ENCODE measurements at regions of chr1 and their contacts with region 1.

Region 1: DNA sequence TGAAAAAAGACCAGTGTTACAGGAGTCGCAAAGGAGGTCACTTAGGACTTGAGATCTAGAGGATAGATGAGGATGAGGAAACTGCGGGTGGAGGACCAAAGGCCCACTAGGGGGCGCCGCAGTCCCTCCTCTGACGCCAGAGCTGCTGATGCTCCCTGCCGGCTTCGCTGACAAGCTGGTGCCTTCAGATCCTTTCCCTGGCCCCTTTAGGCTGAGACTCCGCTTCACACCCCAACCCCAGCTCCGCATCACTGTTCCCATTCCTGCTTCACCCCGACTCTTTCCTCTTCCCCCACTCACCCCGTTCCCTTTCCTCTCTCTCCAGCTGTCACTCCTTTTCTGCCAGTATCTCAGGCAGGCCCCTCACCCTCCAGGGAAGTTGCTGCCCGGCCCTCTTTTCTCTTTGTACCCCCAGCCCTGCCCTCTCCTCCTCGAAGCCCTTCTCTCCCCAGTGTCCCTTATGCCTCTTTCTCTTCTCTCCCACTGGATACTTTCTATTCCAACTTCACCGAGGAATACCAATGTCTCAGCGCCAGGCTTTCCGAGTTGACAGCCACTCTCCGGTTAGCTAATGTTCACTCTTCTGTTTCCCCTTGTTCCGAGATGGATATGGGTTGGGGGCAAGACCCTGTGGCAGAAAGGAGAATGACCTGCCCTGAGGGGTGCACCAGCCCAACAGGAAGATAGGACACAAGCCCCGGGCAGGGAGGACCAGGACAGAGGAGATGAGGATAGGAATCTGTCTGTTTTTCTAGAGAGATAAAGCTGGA is 4.5 kb downstream of the KCNJ9 start:
- DNase-seq: peak; percentile 83
- ATAC-seq: peak; percentile 63 to 73

Region 2: GRCh38 chr1:160031365-160032164 is 54.3 kb before region 1 on chr1 and contains the start of gene PIGM:
- intact Hi-C with region 1: no loop called
- DNase-seq: peak; percentile 96
- ATAC-seq: peak; percentile 97 to 98
- total RNA-seq, gene PIGM: 3.3 to 3.4 TPM

Region 3: DNA sequence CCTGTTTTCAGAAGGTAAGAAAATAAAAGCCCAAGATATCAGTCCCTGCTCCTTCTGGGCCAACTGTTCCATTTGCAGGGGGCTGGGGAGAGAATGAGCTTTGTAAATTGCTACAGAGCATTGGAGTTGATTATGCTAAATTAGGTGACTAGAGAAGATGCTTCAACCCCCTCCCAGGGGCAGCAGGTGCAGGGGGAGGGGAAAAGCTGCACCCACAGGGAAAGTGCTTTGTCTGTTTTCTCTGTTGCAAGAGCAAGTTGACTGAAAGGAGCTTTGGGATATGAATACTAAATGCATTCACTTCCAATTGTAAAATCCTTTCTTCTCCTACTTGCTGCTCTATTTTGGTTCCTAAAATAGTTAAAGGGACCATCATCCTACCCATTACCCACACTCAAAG is 37.5 kb before region 1 on chr1:
- intact Hi-C with region 1: loop called in 1 of 2 experiments (anchors 1 kb)
- DNase-seq: no peak
- ATAC-seq: no peak

Region 4: GRCh38 chr1:160124705-160125478 is 39.0 kb after region 1 on chr1:
- intact Hi-C with region 1: no loop called
- DNase-seq: no peak
- ATAC-seq: peak; percentile 51 to 61

Region 5: DNA sequence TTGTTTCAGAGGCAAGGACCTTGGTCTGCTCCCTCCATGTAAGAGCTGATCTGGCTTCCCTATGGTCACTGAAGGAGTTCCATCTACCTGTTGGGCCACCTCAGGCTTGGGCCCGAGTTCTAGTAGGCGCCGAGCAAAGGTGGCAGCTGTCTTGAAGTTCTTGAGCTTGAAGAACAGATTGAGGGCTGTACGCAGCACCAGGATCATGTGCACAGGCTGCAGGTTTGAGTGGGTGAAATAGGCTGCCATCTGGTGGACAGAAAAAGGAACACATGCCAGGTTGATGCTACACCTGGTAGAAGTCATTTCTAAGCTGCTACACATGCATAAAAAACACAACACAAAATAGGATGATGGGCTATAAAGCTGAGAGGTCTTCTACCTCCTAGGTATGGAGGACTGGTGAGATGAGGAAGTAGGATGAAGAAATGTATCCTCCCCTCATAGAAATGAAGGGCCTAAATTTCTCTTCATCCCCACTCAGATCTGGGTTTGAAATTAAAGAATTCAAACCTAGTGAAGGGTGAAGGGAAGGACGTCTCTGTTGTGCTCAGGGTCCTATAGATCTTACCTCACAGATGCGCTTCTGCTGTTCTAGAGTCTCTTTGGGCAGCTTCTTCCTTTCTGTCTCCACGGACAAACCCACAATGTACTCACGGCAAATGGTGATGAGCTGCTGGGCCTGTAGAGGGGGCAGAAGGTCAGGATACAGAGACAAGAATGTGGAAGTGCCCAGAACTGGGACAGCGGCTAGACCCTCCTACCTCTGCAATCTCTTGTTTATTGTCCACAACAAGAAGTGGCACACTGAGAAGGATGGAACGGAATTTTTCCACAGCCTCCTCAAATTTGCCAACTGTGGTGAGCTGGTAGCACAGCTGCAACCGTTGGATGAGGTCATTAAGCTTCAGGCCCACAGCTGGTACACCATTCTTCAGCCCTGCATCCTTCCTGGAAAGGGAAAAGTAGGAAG is 205.7 kb after region 1 on chr1:
- intact Hi-C with region 1: loop called in 1 of 2 experiments (anchors 5 kb)
- DNase-seq: peak; percentile 53
- ATAC-seq: peak; percentile 84 to 86

Region 6: DNA sequence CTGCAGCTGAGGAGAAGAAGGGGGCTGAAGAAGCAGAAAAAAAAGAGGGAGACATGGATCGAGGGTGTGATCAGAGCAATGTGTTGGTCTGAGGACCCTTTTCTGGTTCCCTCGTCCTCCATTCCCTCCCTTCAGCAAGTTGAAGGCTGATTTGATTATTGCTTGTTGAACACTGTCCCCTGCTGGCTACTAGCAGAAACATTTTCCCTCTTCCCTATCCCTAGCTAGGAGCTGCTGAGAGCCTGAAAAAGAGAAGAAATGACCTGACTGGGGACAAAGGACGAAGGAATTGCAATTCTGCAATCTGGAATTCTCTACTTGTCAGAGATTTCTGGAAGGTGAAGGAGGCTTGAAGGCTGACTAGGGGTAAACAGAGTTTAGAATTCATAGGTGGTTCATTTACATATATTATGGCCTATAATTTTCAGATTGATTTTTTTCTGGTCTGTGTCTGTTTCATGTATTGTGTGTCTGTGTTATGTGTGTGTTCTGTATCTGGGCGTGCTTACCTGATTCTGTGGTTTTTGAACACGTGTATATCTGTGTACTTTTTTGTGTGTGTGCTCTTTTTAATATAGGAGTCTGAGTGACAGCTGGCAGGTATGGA is 290.8 kb after region 1 on chr1:
- intact Hi-C with region 1: loop called in 1 of 2 experiments (anchors 10 kb)
- DNase-seq: no peak
- ATAC-seq: peak; percentile 86 to 90